IMR-90 (cell line): ENCODE measurements at regions of chr3 and their contacts with region 1.

Region 1: GRCh38 chr3:77546246-77546645 is 506.3 kb downstream of the ROBO2 start:
- DNase-seq: no peak
- ATAC-seq: no peak
- H3K4me3 ChIP-seq: no peak overlapping the region
- H3K27ac ChIP-seq: no peak overlapping the region
- H3K4me1 ChIP-seq: no peaks in the 10 kb centered on the region
- H3K27me3 ChIP-seq: no peaks in the 10 kb centered on the region
- CTCF ChIP-seq: no peak
- POLR2A ChIP-seq: no peak
- RAD21 ChIP-seq: no peak

Region 2: DNA sequence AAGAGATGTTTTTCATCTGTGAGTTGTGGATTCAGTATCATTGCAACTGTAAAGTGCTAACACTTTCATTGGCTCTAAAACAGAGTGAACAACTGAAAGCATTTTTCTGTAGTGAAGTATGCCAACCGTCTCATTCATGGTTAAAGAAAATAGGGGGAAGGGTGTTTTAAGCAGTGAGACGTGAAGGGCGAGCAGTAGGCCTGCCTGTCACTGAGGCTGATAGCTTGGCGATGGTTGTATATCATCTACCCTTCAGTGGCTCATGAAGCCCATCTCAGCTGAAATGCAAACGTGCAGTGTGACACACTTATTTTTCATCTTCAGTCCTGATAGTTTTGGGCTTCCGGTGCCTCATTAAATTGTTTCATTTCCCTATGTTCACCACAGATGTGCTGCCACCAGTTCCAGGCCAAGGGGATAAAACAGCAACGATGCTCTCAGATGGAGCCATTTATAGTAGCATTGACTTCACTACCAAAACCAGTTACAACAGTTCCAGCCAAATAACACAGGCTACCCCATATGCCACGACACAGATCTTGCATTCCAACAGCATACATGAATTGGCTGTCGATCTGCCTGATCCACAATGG is 55.7 kb after region 1 on chr3:
- CTCF ChIA-PET with region 1: no interaction called
- POLR2A ChIA-PET with region 1: no interaction called
- dilution Hi-C with region 1: no loop called
- in situ Hi-C with region 1: no loop called
- intact Hi-C with region 1: no loop called
- DNase-seq: no peak
- ATAC-seq: no peak
- H3K4me3 ChIP-seq: no peak overlapping the region
- H3K27ac ChIP-seq: no peak overlapping the region
- H3K4me1 ChIP-seq: no peaks in the 10 kb centered on the region
- H3K27me3 ChIP-seq: no peaks in the 10 kb centered on the region
- CTCF ChIP-seq: no peak
- POLR2A ChIP-seq: no peak
- RAD21 ChIP-seq: no peak

Region 3: GRCh38 chr3:78154521-78155186 is 608.4 kb after region 1 on chr3:
- CTCF ChIA-PET with region 1: no interaction called
- POLR2A ChIA-PET with region 1: interaction called, 10 read pairs
- dilution Hi-C with region 1: no loop called
- in situ Hi-C with region 1: no loop called
- intact Hi-C with region 1: no loop called
- DNase-seq: no peak
- ATAC-seq: no peak
- H3K4me3 ChIP-seq: no peak overlapping the region
- H3K27ac ChIP-seq: no peak overlapping the region
- H3K4me1 ChIP-seq: no peaks in the 10 kb centered on the region
- H3K27me3 ChIP-seq: no peaks in the 10 kb centered on the region
- CTCF ChIP-seq: no peak
- POLR2A ChIP-seq: no peak
- RAD21 ChIP-seq: no peak